Breast epithelium (tissue), 4 donors: ENCODE measurements at regions of chr7 and their contacts with region 1.

Region 1: GRCh38 chr7:2169923-2170575 is 62.7 kb downstream of the MAD1L1 start:
- DNase-seq: no peak
- H3K4me3 ChIP-seq: no peak overlapping the region
- H3K27ac ChIP-seq: no peak overlapping the region
- H3K4me1 ChIP-seq: peaks cover 0 to 3% of the 10 kb centered on the region in 2 donors
- H3K27me3 ChIP-seq: no peaks in the 10 kb centered on the region
- CTCF ChIP-seq: no peak
- POLR2A ChIP-seq: no peak

Region 2: GRCh38 chr7:2143981-2144595 is 26.0 kb before region 1 on chr7:
- intact Hi-C with region 1: loop called (anchors 1 kb)
- DNase-seq: no peak
- H3K4me3 ChIP-seq: no peak overlapping the region
- H3K27ac ChIP-seq: no peak overlapping the region
- H3K4me1 ChIP-seq: no peaks in the 10 kb centered on the region
- H3K27me3 ChIP-seq: no peaks in the 10 kb centered on the region
- CTCF ChIP-seq: no peak
- POLR2A ChIP-seq: no peak